Testis (tissue), 5 donors: ENCODE measurements at regions of chr15 and their contacts with region 1.

Region 1: GRCh38 chr15:75625542-75626347 is at the start of gene SNUPN:
- DNase-seq: peak; percentile 97
- H3K4me3 ChIP-seq: peak within 1 kb of the TSS; percentile 77 to 99
- H3K27ac ChIP-seq: peak within 1 kb of the TSS; percentile 91 to 96
- H3K4me1 ChIP-seq: peaks cover 10% of the 10 kb centered on the region
- H3K27me3 ChIP-seq: no peaks in the 10 kb centered on the region
- CTCF ChIP-seq: peak in 1 of 3 experiments; percentile 22
- POLR2A ChIP-seq: peak; percentile 28
- total RNA-seq, gene SNUPN: 37.0 to 44.6 TPM

Region 2: DNA sequence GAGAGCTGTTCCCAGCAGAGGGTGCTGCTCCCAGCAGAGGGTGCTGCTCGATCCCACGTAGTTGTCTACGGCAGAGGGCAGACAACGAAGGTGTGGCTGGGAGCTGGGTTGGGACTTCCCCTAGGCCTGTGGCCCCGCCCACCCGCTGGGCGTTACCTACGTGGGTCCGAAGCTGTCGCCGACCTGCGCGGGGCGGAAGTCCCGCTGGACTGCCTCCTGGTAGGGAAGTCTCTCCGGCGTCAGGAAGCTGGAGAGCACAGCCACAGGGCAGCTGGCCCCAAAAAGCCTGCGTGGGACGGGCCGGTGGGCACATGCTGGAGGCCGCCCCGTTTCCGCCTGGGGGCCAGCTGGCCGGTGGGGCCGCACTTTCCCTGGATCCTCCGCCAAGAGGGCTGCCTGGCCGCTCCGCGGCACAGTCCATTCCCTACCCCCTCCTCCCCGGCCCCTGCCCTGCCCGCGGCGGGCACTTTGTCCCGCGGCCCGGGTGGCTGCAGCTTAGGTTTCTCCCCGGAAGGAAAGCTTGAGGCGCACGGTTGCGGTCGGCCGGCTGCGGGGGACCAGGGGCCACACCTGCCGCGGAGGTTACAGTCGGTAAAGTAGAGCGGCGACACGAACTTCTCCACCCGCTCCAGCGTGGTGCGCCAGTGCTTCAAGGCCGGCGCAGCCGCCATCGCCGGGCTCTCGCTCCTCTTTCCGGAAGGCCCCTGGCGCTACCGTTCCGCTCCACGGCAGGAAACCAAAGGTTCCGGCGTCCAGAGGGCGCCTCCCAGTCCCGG is 257.6 kb before region 1 on chr15 and contains the start of gene MAN2C1:
- intact Hi-C with region 1: loop called (anchors 10 kb)
- DNase-seq: peak; percentile 98
- H3K4me3 ChIP-seq: peak within 1 kb of the TSS; percentile 93 to 94
- H3K27ac ChIP-seq: peak within 1 kb of the TSS; percentile 95 to 98
- H3K4me1 ChIP-seq: peaks cover 11% of the 10 kb centered on the region
- H3K27me3 ChIP-seq: no peaks in the 10 kb centered on the region
- CTCF ChIP-seq: peak; percentile 61 to 80 (median 76)
- POLR2A ChIP-seq: no peak
- total RNA-seq, gene MAN2C1: 256 to 343 TPM

Region 3: DNA sequence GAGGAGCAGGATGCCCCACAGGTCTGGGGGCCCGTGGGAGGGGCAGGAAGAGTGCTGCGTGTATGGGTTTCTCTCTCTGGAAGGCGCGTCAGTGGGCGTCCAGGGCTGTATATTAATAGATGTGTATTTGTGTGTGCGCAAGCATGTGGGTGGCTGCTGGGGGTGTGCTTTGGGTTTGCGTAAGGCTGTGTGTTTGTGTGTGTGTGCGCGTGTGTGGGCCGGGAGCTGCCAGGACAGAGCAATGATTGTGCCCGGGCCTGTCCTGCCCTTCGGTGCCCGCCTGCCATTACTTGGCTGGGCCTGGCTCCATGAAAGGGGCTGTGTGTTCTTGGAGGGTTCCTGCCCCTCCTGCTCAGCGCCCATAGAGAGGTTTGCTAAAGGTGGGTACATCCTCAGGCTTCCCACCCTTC is 70.6 kb after region 1 on chr15:
- intact Hi-C with region 1: no loop called
- DNase-seq: no peak
- H3K4me3 ChIP-seq: no peak overlapping the region
- H3K27ac ChIP-seq: no peak overlapping the region
- H3K4me1 ChIP-seq: peaks cover 19% of the 10 kb centered on the region
- H3K27me3 ChIP-seq: no peaks in the 10 kb centered on the region
- CTCF ChIP-seq: no peak
- POLR2A ChIP-seq: no peak

Region 4: DNA sequence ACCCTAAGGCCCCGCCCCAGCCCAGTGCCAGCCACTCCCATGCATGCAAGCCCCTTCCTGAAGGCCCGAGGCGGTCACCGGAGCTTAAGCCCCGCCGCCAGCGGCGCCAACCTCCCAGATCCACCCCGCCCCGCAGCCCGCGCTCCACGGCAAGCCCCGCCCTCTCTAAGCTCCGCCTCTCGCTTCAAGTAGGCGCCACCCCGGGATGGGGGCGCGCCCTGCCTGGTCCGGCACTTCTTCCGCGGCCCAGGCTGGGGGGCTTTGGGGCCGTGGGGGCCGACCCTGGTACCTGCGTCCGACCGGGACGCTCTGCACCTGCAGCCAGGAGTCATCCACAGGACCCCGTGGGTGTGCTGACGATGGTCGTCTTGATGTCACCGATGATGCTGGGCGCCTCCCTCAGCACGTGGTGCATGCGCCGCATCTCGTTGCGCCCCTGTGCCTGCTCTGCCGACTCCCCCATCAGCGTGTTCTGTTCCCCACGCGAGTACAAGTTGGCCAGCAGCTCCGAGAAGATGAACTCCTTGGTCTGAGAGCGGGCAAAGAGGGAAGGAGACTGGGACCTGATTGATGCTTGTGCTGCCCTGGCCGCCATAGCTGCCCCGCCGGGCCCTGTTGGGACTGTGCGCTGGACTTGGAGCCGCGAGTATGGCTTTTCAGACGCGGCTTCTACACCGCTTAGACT is 113.0 kb after region 1 on chr15:
- intact Hi-C with region 1: no loop called
- DNase-seq: peak; percentile 98
- H3K4me3 ChIP-seq: peak overlapping the region; percentile 69 to 89
- H3K27ac ChIP-seq: peak overlapping the region; percentile 77 to 79
- H3K4me1 ChIP-seq: peaks cover 33% of the 10 kb centered on the region
- H3K27me3 ChIP-seq: no peaks in the 10 kb centered on the region
- CTCF ChIP-seq: no peak
- POLR2A ChIP-seq: no peak